Transverse colon (tissue), 4 donors: ENCODE measurements at regions of chr3 and their contacts with region 1.

Region 1: DNA sequence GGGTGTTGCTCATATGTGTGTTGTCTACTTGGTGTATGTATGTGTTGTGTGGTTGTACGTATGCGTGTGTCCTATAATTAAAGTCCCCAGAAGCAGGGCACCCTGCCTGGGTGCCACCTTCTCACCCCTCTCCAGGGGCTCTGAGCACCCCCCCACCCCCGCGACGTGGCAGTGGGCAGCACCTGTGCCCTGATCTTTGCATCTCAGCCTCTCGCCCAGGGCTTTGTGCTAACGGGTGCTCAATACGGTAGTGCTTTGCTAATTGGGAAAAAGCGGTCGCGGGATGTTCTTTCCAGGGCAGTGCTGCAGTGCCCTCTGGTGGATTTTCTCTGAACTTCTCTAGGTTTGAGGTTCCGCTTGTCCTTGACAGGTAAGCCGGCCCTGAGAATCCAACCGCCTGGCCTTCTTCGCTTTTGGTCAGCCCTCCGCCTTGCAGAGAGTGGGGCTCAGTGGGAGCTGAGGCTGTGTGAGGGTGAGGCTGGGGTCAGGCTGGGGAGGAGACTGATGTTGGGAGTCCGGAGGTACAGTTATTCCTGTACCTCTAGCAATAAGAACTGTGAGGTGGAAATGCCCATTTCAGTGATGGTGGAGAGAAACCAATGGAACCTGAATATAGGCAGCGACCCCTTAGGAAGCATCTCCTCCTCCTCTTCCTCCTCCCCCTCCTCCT is 17.6 kb upstream of the EPHB3 start:
- DNase-seq: peak; percentile 80
- H3K4me3 ChIP-seq: no peak overlapping the region
- H3K27ac ChIP-seq: no peak overlapping the region
- H3K4me1 ChIP-seq: peaks cover 0 to 14% (median 3%) of the 10 kb centered on the region in 4 donors
- H3K27me3 ChIP-seq: peaks cover 37% of the 10 kb centered on the region
- CTCF ChIP-seq: peak; percentile 81 to 94 (median 93)
- EP300 ChIP-seq: no peak
- POLR2A ChIP-seq: no peak

Region 2: DNA sequence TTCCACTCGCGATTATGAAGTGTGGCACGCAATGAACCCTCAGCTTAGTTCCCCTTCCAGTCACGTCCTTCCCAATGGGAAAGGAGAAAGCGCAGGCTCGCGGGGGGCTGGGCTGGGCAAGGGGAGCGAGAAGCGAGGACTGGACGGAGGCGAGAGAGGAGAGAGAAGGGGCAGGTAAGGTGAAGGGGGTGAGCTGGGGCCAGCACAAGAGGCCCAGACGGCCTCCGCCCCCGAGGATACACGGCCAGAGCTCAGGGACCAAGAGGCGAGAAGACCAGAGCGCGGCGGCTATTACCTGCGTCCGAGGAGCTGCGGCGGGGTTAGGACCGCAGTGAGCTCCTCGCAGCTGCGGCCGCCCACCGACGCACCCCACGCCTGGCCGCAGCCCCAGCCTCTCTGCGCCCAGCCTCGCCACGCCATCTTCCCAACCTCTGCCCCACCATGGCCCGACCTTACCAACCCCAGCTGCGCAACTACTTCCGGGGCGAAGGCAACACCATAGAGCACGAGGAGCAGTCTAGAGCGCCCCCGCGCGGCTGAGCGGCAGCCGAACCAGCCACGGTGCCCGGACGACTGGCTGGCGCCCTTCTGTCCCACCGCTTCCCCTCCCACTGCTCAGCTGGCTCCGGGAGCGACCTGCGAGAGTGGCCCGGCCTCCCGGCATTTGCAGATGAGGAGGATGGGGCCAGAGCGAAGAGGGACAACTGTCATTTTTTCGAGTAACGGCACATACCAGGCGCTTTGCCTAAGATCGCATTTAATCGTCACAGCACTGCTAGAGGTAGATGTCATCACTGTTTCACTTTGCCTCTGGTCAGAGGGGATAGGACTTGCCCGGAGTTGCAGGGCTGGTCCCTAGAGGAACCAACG is 659.3 kb before region 1 on chr3 and contains the start of gene PARL:
- in situ Hi-C with region 1: loop called in 1 of 4 experiments (anchors 25 kb)
- intact Hi-C with region 1: no loop called
- DNase-seq: peak; percentile 97
- H3K4me3 ChIP-seq: peak within 1 kb of the TSS; percentile 84 to 96 (median 90)
- H3K27ac ChIP-seq: peak within 1 kb of the TSS; percentile 85 to 91 (median 86)
- H3K4me1 ChIP-seq: peaks cover 16 to 27% (median 22%) of the 10 kb centered on the region in 4 donors
- H3K27me3 ChIP-seq: no peaks in the 10 kb centered on the region
- CTCF ChIP-seq: peak; percentile 91 to 96 (median 93)
- EP300 ChIP-seq: no peak
- POLR2A ChIP-seq: peak; percentile 79
- total RNA-seq, gene PARL: 27.3 to 61.3 (median 48.8) TPM

Region 3: DNA sequence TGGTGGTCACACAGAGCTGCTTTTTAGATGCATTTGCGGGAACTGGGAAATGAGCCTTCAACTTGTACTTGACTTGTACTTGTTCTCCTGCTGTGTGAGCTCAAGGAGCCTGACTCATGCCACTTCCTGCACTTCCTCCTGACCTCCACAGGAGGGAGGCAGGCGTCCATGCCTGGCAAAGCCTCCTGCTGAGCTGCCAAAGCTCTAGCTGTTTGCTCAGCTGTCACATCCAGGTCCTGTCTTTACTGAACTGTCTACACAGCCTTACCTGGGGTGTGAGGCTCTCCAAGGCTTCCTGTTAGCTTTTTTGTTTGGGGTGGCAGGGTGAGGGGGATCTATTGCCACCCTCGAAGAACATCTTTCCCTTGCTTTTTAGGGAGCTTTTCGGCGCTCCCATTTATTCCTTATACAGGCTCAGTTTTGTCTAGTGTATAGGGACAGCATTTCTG is 172.4 kb before region 1 on chr3:
- in situ Hi-C with region 1: loop called in 1 of 4 experiments (anchors 10 kb)
- intact Hi-C with region 1: loop called (anchors 5 kb)
- DNase-seq: peak; percentile 78
- H3K4me3 ChIP-seq: no peak overlapping the region
- H3K27ac ChIP-seq: no peak overlapping the region
- H3K4me1 ChIP-seq: peaks cover 0 to 7% (median 0%) of the 10 kb centered on the region in 4 donors
- H3K27me3 ChIP-seq: peaks cover 11% of the 10 kb centered on the region
- CTCF ChIP-seq: peak; percentile 85 to 93 (median 91)
- EP300 ChIP-seq: no peak
- POLR2A ChIP-seq: no peak

Region 4: GRCh38 chr3:184391266-184391665 is 152.7 kb before region 1 on chr3:
- in situ Hi-C with region 1: no loop called
- intact Hi-C with region 1: no loop called
- DNase-seq: no peak
- H3K4me3 ChIP-seq: no peak overlapping the region
- H3K27ac ChIP-seq: no peak overlapping the region
- H3K4me1 ChIP-seq: no peaks in the 10 kb centered on the region
- H3K27me3 ChIP-seq: no peaks in the 10 kb centered on the region
- CTCF ChIP-seq: no peak
- EP300 ChIP-seq: no peak
- POLR2A ChIP-seq: no peak

Region 5: DNA sequence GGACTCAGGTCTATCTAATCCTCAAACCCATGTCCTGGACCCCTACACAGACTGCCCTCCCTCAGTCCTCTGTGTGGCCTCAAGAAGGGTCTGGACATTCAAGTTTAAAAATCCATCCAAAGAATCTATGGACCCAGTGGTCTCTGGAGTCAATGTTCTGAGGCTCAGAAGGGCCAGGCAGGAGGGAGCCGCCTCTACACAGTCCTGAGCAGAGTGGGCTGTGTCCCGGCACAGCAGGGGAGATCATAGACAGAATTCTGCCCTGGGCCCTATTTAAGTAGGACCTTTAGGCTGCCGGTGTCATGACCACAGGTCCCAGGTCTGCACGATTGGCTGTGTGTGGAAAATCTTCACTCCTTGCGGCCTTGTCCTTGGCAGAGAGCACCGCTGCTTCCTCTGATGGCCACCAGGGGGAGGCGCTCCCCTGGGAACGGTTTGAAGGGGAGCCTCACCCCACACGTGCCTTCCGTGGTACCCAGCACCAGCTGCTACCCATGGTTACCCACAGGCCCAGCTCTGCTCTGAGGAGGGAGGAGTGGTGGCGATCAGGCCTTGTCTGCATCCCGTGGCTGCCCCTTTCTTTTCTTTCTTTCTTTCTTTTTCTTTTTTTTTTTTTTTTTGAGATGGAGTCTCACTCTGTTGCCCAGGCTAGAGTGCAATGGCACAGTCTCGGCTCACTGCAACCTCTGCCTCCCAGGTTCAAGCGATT is 126.2 kb before region 1 on chr3:
- in situ Hi-C with region 1: loop called in 2 of 4 experiments (anchors 10 to 25 kb)
- intact Hi-C with region 1: no loop called
- DNase-seq: peak; percentile 76
- H3K4me3 ChIP-seq: no peak overlapping the region
- H3K27ac ChIP-seq: no peak overlapping the region
- H3K4me1 ChIP-seq: no peaks in the 10 kb centered on the region
- H3K27me3 ChIP-seq: no peaks in the 10 kb centered on the region
- CTCF ChIP-seq: peak; percentile 76 to 90 (median 88)
- EP300 ChIP-seq: no peak
- POLR2A ChIP-seq: no peak

Region 6: DNA sequence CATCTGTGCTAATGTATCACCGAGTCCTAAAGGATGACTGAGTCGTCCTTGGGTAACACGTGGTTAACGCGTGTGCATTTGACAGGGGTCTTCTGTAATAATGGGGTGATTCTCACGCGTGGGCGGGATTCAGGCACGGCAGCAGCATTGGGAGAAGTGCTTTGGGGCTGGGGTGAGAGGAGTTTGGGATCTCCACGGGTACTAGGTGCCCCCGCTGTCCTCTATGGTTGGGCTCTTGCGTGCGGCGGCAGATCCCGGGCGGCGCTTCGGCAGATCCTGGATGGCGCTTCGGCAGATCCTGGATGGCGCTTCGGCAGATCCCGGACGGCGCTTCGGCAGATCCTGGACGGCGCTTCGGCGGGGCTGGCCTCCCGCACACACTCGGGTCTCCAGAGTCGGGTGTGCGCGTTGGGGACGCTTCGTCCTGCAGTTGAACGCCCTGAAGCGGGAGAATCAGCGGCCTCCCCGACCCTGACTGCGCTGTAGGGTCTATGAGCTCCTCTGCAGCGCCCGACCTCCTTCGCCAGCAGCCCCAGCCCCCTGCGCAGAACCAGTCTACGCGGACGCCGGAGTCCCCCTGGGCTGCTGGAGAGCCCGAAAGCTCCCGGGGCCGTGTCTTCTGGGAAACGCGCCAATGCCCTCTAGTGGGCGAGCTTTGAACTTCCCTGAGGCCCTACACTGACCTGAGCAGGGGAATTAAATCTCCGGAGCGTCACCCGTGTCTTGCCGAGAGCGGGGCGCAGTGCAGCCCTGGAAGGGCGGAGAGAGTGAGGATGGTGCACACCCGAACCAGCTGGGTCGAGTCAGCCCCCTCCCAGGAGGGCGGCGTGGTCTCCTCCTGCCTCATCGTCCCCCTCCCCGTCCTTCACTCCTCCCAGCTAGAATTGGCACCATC is 30.5 kb before region 1 on chr3:
- in situ Hi-C with region 1: no loop called
- intact Hi-C with region 1: no loop called
- DNase-seq: peak; percentile 87
- H3K4me3 ChIP-seq: peak overlapping the region; percentile 11 to 49 (median 28)
- H3K27ac ChIP-seq: no peak overlapping the region
- H3K4me1 ChIP-seq: peaks cover 0 to 11% (median 7%) of the 10 kb centered on the region in 4 donors
- H3K27me3 ChIP-seq: peaks cover 81% of the 10 kb centered on the region
- CTCF ChIP-seq: peak; percentile 83 to 91 (median 87)
- EP300 ChIP-seq: no peak
- POLR2A ChIP-seq: no peak